AG04450 (cell line): ENCODE measurements at regions of chr4 and their contacts with region 1.

Region 1: DNA sequence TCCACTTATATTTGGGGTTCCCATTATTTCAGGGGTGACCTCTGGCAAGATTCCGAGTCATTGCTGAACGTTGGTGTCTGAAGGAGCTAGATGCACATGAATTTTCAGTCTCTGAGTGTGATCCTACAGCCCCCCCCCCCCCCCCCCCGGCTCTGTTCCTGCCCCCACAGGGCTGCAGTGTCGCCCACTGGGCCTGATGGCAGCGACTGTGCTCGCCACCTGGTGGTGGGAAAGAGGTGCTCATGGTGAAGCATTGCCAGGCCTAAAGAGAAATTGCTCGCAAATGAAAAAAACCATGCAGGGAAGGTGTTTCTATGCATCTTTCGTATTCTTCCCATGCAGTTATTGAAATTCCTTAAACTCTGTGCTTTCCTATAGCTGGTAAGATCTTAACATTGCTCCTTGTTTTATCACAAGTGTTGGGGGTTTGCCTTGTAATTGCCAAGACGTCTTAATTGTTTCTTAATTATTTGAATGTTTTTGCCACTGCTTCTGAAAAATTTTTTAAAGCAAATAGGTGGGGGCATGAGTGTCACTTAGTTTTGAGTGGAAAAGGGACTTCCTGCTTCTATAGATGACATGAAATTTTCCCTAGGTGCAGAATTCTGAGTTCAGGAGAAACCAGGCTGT is 63.2 kb downstream of the CLDN22 start:
- DNase-seq: no peak
- H3K4me3 ChIP-seq: no peak overlapping the region
- H3K27ac ChIP-seq: no peak overlapping the region
- H3K27me3 ChIP-seq: no peaks in the 10 kb centered on the region
- CTCF ChIP-seq: peak; percentile 81

Region 2: GRCh38 chr4:182925298-182925738 is 331.6 kb before region 1 on chr4:
- CTCF ChIA-PET with region 1: interaction called, 34 read pairs
- POLR2A ChIA-PET with region 1: interaction called, 4 read pairs
- DNase-seq: no peak
- H3K4me3 ChIP-seq: no peak overlapping the region
- H3K27ac ChIP-seq: peak overlapping the region; percentile 47
- H3K27me3 ChIP-seq: no peaks in the 10 kb centered on the region
- CTCF ChIP-seq: peak; percentile 68

Region 3: GRCh38 chr4:183098723-183099536 is 157.9 kb before region 1 on chr4 and contains the start of gene WWC2:
- CTCF ChIA-PET with region 1: interaction called, 23 read pairs
- POLR2A ChIA-PET with region 1: interaction called, 6 read pairs
- DNase-seq: peak; percentile 79
- H3K4me3 ChIP-seq: peak within 1 kb of the TSS; percentile 91
- H3K27ac ChIP-seq: peak within 1 kb of the TSS; percentile 98
- H3K27me3 ChIP-seq: no peaks in the 10 kb centered on the region
- CTCF ChIP-seq: no peak
- polyA plus RNA-seq, gene WWC2: 36.3 and 43.6 TPM in 2 replicates

Region 4: DNA sequence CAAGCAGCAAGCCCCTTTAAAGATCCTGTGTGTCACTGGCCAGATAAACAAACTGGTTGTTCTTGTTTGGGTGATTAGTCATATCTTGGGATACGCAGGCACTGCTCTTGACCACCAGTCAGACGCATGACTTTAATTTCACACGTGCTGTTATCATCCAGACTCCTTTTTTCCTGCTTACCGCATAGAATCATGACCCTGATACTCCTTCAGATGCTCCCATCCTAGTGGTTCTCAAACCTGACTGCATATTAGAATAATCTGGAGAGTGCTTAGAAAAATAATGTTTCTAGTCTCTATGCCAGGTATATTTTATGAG is 15.6 kb before region 1 on chr4:
- CTCF ChIA-PET with region 1: interaction called, 46 read pairs
- POLR2A ChIA-PET with region 1: no interaction called
- DNase-seq: peak; percentile 54
- H3K4me3 ChIP-seq: no peak overlapping the region
- H3K27ac ChIP-seq: no peak overlapping the region
- H3K27me3 ChIP-seq: no peaks in the 10 kb centered on the region
- CTCF ChIP-seq: no peak

Region 5: DNA sequence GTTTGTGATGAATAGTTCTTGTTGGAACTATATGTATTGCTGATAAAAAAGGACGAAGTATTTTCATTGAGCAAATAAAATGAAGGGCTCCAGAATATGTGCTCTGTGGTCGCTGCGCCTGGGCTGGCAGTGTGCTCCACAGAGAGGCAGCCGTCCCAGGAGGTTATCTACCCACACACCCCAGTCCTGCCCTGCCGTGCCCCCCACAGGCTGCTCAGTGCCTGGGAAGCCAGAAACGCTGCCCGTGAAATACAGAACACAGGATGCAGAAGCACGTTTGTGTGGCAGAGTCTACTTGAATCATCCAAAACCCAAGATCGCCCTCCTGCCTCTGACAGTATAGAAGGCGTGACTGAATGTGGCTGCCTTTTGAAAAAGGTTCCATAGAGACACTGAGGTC is 61.8 kb after region 1 on chr4:
- CTCF ChIA-PET with region 1: interaction called, 11 read pairs
- POLR2A ChIA-PET with region 1: no interaction called
- DNase-seq: no peak
- H3K4me3 ChIP-seq: no peak overlapping the region
- H3K27ac ChIP-seq: no peak overlapping the region
- H3K27me3 ChIP-seq: no peaks in the 10 kb centered on the region
- CTCF ChIP-seq: no peak